PC-3 (cell line): ENCODE measurements at regions of chr10 and their contacts with region 1.

Region 1: GRCh38 chr10:101095542-101096213 is 33.9 kb downstream of the KAZALD1 start:
- DNase-seq: peak; percentile 85
- ATAC-seq: peak; percentile 61
- H3K4me3 ChIP-seq: no peak overlapping the region
- H3K27ac ChIP-seq: no peak overlapping the region
- H3K4me1 ChIP-seq: peaks cover 32% of the 10 kb centered on the region
- H3K27me3 ChIP-seq: no peaks in the 10 kb centered on the region
- CTCF ChIP-seq: peak; percentile 77

Region 2: GRCh38 chr10:101011517-101012428 is 83.9 kb before region 1 on chr10:
- CTCF ChIA-PET with region 1: no interaction called
- POLR2A ChIA-PET with region 1: no interaction called
- intact Hi-C with region 1: no loop called
- DNase-seq: peak; percentile 40
- ATAC-seq: no peak; the same call in 1 of the 2 replicates
- H3K4me3 ChIP-seq: no peak overlapping the region
- H3K27ac ChIP-seq: peak overlapping the region; percentile 29; the same call in 1 of the 2 replicates
- H3K4me1 ChIP-seq: peaks cover 29% of the 10 kb centered on the region
- H3K27me3 ChIP-seq: no peaks in the 10 kb centered on the region
- CTCF ChIP-seq: 0 out of 2 replicates have a peak, but pooled peaks have one; percentile 31

Region 3: DNA sequence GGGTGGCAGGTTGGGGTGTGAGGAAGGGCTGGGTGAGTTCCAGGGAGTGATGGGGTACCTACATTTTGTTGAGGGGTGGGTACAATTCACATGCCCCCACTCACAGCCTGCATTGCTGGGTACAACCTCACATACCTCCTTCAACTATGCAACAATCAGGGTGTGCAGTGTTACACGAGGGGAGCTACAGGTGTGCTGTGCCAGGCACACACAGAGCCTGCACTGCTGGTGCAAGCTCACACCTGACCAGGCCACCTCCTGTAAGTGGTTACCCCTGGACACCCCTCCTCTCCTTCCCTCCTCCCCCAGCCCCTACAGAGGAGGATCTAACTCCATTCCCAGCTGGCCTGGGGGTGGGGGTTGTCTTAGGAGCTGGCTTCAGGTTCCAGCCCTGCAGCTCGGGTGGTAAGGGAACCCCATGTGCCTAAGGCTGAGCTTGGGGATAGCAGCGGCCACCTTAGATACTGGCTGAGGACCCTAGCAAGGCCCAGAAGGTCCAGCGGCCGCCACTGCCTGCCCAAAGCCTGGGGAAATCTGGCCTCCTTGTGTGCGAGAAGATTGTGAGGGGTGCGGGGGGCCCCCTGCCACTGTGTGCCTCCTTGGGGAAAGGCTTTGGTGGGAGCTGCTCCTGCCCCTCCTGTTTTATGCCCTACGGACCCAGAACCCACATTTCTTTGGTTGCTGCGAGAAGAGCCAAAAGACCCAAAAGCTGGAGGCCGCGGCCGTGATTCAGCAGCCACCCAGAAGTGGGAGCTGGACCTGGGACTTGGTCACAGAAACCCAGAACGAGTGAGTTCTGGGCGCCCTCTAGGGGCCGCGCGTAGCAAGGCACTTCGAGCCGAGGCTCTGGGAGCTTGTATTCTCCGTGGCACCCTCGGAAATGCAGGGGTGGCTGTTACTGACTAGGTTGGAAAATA is 46.2 kb after region 1 on chr10:
- CTCF ChIA-PET with region 1: interaction called, 48 read pairs
- POLR2A ChIA-PET with region 1: interaction called, 6 read pairs
- intact Hi-C with region 1: no loop called
- DNase-seq: peak; percentile 90
- ATAC-seq: peak; percentile 90
- H3K4me3 ChIP-seq: no peak overlapping the region
- H3K27ac ChIP-seq: no peak overlapping the region
- H3K4me1 ChIP-seq: peaks cover 6% of the 10 kb centered on the region; the same call in 1 of the 2 replicates
- H3K27me3 ChIP-seq: no peaks in the 10 kb centered on the region
- CTCF ChIP-seq: peak; percentile 89